ENCODE measurements at regions of chr16 and their contacts with region 1.

Region 1: GRCh38 chr16:84084570-84085270 is 32.0 kb downstream of the MBTPS1 start:
- DNase-seq: peak; percentile 85
- ATAC-seq: peak; percentile 87
- H3K4me3 Mint-ChIP-seq: no peak overlapping the region
- H3K27ac Mint-ChIP-seq: peak overlapping the region; percentile 25
- H3K4me1 Mint-ChIP-seq: peaks cover 50% of the 10 kb centered on the region
- H3K27me3 Mint-ChIP-seq: no peaks in the 10 kb centered on the region

Region 2: DNA sequence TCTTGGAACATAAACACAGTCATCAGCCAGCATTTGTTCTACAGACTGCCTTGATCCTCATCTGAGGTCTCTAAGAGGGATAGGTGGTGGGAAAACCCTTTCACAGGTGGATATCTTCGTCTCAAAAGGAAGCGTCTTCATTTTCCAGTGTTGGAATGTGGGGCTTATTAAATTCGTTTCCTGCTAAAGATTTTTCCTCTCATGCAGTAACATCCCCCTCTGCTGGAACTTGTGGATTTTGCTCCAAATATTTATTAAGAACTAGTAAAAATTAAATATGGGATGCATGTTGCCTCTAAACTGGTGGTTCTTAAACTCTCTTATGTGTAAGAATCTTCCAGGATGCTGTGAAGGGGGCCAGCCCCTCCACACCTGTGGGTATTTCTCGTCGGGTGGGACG is 205.9 kb before region 1 on chr16:
- CTCF ChIA-PET with region 1: no interaction called
- DNase-seq: no peak
- ATAC-seq: no peak
- H3K4me3 Mint-ChIP-seq: no peak overlapping the region
- H3K27ac Mint-ChIP-seq: no peak overlapping the region
- H3K4me1 Mint-ChIP-seq: no peaks in the 10 kb centered on the region
- H3K27me3 Mint-ChIP-seq: peaks cover 35% of the 10 kb centered on the region

Region 3: GRCh38 chr16:84022644-84023043 is 62.1 kb before region 1 on chr16:
- CTCF ChIA-PET with region 1: no interaction called
- DNase-seq: no peak
- ATAC-seq: no peak
- H3K4me3 Mint-ChIP-seq: no peak overlapping the region
- H3K27ac Mint-ChIP-seq: no peak overlapping the region
- H3K4me1 Mint-ChIP-seq: no peaks in the 10 kb centered on the region
- H3K27me3 Mint-ChIP-seq: peaks cover 3% of the 10 kb centered on the region

Region 4: GRCh38 chr16:84065536-84066132 is 19.1 kb before region 1 on chr16:
- CTCF ChIA-PET with region 1: interaction called, 12 read pairs
- DNase-seq: peak; percentile 58
- ATAC-seq: peak; percentile 42
- H3K4me3 Mint-ChIP-seq: no peak overlapping the region
- H3K27ac Mint-ChIP-seq: no peak overlapping the region
- H3K4me1 Mint-ChIP-seq: peaks cover 7% of the 10 kb centered on the region
- H3K27me3 Mint-ChIP-seq: no peaks in the 10 kb centered on the region

Region 5: GRCh38 chr16:84116720-84117493 is 32.2 kb after region 1 on chr16 and contains the start of gene MBTPS1:
- CTCF ChIA-PET with region 1: interaction called, 40 read pairs
- DNase-seq: peak; percentile 98
- ATAC-seq: peak; percentile 94
- H3K4me3 Mint-ChIP-seq: peak within 1 kb of the TSS; percentile 88
- H3K27ac Mint-ChIP-seq: peak within 1 kb of the TSS; percentile 93
- H3K4me1 Mint-ChIP-seq: peaks cover 23% of the 10 kb centered on the region
- H3K27me3 Mint-ChIP-seq: no peaks in the 10 kb centered on the region
- total RNA-seq, gene MBTPS1: 56.1 to 57.8 TPM

Region 6: DNA sequence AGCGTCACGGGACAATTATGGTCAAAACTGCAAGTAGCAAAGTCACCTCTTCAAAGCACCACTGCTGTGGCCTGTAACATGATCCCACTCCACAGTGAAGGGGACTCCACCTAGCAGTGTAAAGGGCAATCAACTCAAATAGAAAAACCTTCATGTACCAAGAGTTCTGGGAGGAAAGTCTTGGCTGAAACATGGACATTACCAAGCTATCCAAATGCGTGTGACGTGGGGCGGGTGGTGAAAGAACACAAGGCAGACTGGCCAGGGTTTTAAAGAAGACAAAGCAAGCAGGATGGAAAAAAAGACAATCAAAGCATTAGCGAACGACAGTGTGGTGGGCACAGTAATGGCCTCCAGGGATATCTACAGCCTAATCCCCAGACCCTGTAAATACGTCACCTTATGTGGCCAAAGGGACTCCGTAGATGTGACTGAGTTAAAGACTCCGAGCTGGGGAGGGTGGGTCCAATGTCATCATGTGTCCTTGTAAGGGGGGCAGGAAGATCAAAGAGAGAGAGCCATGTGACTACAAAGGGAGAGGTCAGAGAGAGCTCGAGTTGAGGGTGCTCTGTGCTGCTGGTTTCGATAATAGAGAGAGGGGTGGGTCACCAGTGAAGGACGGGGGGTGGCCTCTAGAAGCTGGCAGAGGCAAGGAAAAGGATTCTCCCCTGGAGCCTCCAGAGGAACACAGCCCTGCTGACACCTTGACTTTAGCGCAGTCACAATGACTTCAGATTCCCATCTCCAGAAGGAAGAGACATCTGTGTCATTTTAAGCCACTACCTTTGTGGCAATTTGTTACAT is 54.3 kb after region 1 on chr16:
- CTCF ChIA-PET with region 1: interaction called, 12 read pairs
- DNase-seq: peak; percentile 72
- ATAC-seq: peak; percentile 91
- H3K4me3 Mint-ChIP-seq: peak overlapping the region; percentile 11
- H3K27ac Mint-ChIP-seq: peak overlapping the region; percentile 76
- H3K4me1 Mint-ChIP-seq: peaks cover 28% of the 10 kb centered on the region
- H3K27me3 Mint-ChIP-seq: no peaks in the 10 kb centered on the region

Region 7: DNA sequence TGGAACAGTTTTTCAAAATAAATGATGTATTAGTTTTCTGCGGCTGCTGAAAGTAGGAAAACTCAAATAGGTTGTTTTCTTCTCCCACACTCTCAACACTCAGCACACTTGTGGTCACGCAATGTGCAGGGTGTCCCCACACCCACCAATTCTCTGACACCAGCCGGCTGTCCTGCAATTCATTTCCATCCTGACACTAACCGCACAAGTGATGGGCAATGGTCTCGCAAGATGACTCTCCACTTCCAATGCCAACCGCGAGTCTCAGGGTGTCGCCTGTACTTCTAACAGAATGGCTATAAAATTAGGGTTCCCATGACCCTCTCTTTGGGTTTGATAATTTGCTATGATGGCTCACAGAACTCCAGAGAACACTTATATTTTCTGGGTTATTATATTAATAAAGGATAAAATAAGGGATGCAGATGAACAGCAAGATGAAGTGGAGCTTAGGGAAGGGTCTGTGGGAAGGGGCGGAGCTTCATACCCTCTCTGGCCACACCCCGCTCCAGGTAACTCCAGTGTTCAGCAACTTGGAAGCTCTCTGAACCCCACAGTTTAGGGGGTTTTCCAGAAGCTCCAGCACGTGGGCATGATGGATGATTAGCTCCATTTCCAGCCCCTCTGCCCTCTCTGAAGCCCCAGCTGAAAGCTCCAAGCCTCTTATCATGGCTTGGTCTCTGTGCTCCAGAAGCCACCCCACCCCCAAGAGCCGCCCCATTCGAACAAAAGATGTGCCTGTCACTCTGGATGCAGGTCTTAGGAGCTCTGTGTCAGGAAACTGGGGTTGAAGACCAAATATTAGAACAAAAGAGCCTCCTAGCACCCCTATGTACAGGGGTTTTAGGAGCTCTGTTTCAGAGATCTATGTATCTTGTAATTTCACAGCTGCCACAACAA is 82.3 kb after region 1 on chr16:
- CTCF ChIA-PET with region 1: interaction called, 12 read pairs
- DNase-seq: peak; percentile 70
- ATAC-seq: peak; percentile 45
- H3K4me3 Mint-ChIP-seq: no peak overlapping the region
- H3K27ac Mint-ChIP-seq: no peak overlapping the region
- H3K4me1 Mint-ChIP-seq: peaks cover 8% of the 10 kb centered on the region
- H3K27me3 Mint-ChIP-seq: peaks cover 46% of the 10 kb centered on the region

Region 8: DNA sequence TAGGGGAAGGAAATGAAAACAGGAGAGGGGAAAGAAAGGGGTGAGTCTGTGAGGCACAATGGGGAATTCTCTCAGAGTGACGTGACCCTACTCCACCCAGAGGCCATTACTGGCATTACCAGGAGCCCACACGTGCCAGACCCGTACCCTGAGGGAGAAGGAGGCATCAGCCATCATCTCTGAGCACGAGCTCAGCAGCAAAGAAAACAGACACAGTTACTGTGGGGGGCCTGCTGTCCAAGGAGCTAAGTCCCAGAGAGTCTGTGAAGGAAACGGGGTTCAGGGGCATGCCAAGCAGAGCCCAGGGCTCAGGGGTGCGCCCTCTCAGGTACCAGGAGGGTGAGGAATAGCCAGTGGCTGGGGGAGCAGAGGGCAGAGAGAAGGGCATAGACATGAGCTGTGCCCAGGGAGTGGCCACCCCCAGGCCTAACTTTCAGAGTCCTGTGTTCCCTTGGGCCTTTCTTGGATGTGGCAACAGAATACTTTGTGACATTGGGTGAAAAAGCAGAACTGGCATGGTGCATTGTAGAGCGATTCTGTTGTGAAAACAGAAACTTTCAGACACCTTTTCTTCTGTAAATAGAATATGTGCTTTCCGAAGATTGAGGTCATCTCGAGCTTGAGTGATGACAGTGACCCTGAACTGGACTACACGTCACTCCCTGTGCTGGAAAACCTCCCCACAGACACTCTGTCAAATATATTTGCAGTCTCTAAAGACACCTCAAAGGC is 90.8 kb after region 1 on chr16:
- CTCF ChIA-PET with region 1: interaction called, 17 read pairs
- DNase-seq: peak; percentile 56
- ATAC-seq: peak; percentile 80
- H3K4me3 Mint-ChIP-seq: no peak overlapping the region
- H3K27ac Mint-ChIP-seq: no peak overlapping the region
- H3K4me1 Mint-ChIP-seq: peaks cover 2% of the 10 kb centered on the region
- H3K27me3 Mint-ChIP-seq: no peaks in the 10 kb centered on the region